ENCODE measurements at regions of chr11 and their contacts with region 1.

Region 1: GRCh38 chr11:4493480-4493818 is 11.0 kb downstream of the OR52K1 start:
- DNase-seq: no peak
- H3K4me3 ChIP-seq: no peak overlapping the region
- H3K27ac ChIP-seq: no peak overlapping the region
- H3K4me1 ChIP-seq: peaks cover 4% of the 10 kb centered on the region
- H3K27me3 ChIP-seq: no peaks in the 10 kb centered on the region
- CTCF ChIP-seq: no peak
- POLR2A ChIP-seq: no peak

Region 2: GRCh38 chr11:4187055-4187988 is 306.1 kb before region 1 on chr11:
- intact Hi-C with region 1: loop called (anchors 2 kb)
- DNase-seq: peak; percentile 93 to 94
- H3K4me3 ChIP-seq: peak overlapping the region; percentile 56 to 65
- H3K27ac ChIP-seq: peak overlapping the region; percentile 78
- H3K4me1 ChIP-seq: peaks cover 14% of the 10 kb centered on the region
- H3K27me3 ChIP-seq: no peaks in the 10 kb centered on the region
- CTCF ChIP-seq: peak; percentile 91 to 99 (median 92)
- POLR2A ChIP-seq: no peak

Measured in vagina (tissue), 2 donors.